B cell (primary cell): ENCODE measurements at regions of chr5 and their contacts with region 1.

Region 1: GRCh38 chr5:141960449-141961202 is 2.6 kb upstream of the PCDH12 start:
- DNase-seq: peak; percentile 93
- ATAC-seq: peak; percentile 97
- H3K4me3 ChIP-seq: peak overlapping the region in 1 of 5 experiments; percentile 2
- H3K4me3 Mint-ChIP-seq: peak overlapping the region; percentile 29
- H3K27ac ChIP-seq: peak overlapping the region in 1 of 2 donors; percentile 18
- H3K27ac Mint-ChIP-seq: peak overlapping the region; percentile 73
- H3K4me1 ChIP-seq: peaks cover 10 to 25% of the 10 kb centered on the region in 2 donors
- H3K4me1 Mint-ChIP-seq: peaks cover 17% of the 10 kb centered on the region
- H3K27me3 ChIP-seq: no peaks in the 10 kb centered on the region
- H3K27me3 Mint-ChIP-seq: no peaks in the 10 kb centered on the region
- CTCF ChIP-seq: peak; percentile 80

Region 2: DNA sequence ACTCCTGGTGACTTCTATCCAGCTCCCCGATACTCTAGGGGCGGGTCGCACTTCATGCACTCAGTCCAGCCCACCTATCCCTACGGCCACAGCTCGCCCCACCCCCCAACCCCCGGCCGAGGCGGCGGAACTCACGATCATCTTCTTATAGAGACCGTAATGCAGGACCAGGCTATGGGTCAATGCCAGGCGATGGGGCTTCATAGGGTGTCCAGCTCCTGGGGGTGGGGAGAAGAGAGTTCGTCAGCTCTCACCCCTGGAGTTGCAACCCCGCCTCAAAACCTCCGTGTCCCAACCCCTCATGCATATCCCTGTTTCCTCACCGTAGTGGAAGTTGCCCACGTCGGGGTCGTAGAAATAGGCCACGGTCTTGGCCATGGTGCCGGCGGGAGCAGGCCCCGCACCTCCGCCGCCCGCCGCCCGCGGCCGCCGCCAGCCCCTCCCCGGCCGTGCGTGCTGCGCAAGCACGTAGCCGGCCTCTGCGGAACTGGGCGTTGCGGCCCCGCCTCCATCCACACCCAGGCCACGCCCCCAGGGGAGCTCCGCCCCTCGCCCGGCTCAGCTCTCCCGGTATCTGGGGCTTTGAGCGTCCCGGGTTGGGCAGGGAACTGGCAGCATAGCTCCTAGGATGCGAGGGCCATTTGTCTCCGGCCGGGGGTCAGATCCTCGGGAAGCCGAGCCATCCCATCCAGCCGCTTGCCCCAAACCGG is 324.1 kb before region 1 on chr5 and contains the starts of genes HDAC3 and RELL2:
- CTCF ChIA-PET with region 1: no interaction called
- POLR2A ChIA-PET with region 1: no interaction called
- intact Hi-C with region 1: loop called (anchors 2 kb)
- DNase-seq: peak; percentile 94
- ATAC-seq: peak; percentile 89
- H3K4me3 ChIP-seq: peak within 1 kb of the TSS; percentile 70 to 99 (median 82)
- H3K4me3 Mint-ChIP-seq: peak within 1 kb of the TSS; percentile 94
- H3K27ac ChIP-seq: peak within 1 kb of the TSS; percentile 58 to 77
- H3K27ac Mint-ChIP-seq: peak within 1 kb of the TSS; percentile 85
- H3K4me1 ChIP-seq: peaks cover 30 to 36% of the 10 kb centered on the region in 2 donors
- H3K4me1 Mint-ChIP-seq: peaks cover 39% of the 10 kb centered on the region
- H3K27me3 ChIP-seq: no peaks in the 10 kb centered on the region
- H3K27me3 Mint-ChIP-seq: no peaks in the 10 kb centered on the region
- CTCF ChIP-seq: no peak
- total RNA-seq, gene HDAC3: 85.5 and 86.9 TPM in 2 replicates
- total RNA-seq, gene RELL2: 11.6 and 12.1 TPM in 2 replicates

Region 3: DNA sequence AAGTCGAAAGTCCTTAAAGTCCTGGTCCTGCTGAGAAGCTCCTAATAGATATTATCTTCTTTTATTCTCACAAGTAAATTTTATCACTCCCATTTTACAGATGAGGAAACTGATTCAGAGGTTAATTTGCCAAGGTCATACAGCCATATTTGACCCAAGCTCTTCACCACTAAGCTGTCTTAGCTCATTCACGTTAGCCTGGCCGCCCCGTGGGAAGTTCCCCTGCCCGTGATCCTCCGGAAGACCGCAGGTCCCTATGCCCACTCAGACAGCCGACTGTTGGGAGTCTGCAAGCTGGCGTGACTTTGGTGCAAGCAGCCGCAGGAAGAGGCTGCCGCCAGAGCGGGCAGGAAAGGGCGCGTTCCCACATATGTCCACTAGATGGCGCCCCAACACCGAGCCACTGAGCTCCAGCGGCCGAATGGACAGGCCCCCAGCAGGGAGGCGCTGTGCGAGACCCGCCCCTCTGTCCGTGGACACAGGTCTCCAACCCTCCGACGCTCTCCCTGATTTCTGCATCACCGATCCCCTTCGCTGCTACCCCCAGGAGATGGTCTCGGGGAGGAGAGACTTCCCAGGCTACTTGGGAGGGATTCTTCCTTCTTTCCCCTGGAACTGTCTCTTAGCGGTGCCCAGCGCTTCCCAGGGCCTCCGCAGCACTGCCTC is 268.6 kb before region 1 on chr5:
- CTCF ChIA-PET with region 1: interaction called, 198 read pairs
- POLR2A ChIA-PET with region 1: interaction called, 7 read pairs
- intact Hi-C with region 1: loop called (anchors 1 kb)
- DNase-seq: peak; percentile 86
- ATAC-seq: peak; percentile 95
- H3K4me3 ChIP-seq: peak overlapping the region in 4 of 5 experiments; percentile 3 to 57 (median 33)
- H3K4me3 Mint-ChIP-seq: peak overlapping the region; percentile 44
- H3K27ac ChIP-seq: no peak overlapping the region
- H3K27ac Mint-ChIP-seq: no peak overlapping the region
- H3K4me1 ChIP-seq: peaks cover 8% of the 10 kb centered on the region in 2 donors
- H3K4me1 Mint-ChIP-seq: peaks cover 7% of the 10 kb centered on the region
- H3K27me3 ChIP-seq: peaks cover 0 to 47% (median 7%) of the 10 kb centered on the region in 4 experiments
- H3K27me3 Mint-ChIP-seq: peaks cover 68% of the 10 kb centered on the region
- CTCF ChIP-seq: peak; percentile 98

Region 4: GRCh38 chr5:141889282-141889871 is 71.2 kb before region 1 on chr5:
- CTCF ChIA-PET with region 1: interaction called, 25 read pairs
- POLR2A ChIA-PET with region 1: no interaction called
- intact Hi-C with region 1: no loop called
- DNase-seq: no peak
- ATAC-seq: no peak
- H3K4me3 ChIP-seq: no peak overlapping the region
- H3K4me3 Mint-ChIP-seq: no peak overlapping the region
- H3K27ac ChIP-seq: no peak overlapping the region
- H3K27ac Mint-ChIP-seq: no peak overlapping the region
- H3K4me1 ChIP-seq: peaks cover 0 to 4% of the 10 kb centered on the region in 2 donors
- H3K4me1 Mint-ChIP-seq: no peaks in the 10 kb centered on the region
- H3K27me3 ChIP-seq: peaks cover 0 to 11% (median 8%) of the 10 kb centered on the region in 4 experiments
- H3K27me3 Mint-ChIP-seq: peaks cover 34% of the 10 kb centered on the region
- CTCF ChIP-seq: no peak

Region 5: DNA sequence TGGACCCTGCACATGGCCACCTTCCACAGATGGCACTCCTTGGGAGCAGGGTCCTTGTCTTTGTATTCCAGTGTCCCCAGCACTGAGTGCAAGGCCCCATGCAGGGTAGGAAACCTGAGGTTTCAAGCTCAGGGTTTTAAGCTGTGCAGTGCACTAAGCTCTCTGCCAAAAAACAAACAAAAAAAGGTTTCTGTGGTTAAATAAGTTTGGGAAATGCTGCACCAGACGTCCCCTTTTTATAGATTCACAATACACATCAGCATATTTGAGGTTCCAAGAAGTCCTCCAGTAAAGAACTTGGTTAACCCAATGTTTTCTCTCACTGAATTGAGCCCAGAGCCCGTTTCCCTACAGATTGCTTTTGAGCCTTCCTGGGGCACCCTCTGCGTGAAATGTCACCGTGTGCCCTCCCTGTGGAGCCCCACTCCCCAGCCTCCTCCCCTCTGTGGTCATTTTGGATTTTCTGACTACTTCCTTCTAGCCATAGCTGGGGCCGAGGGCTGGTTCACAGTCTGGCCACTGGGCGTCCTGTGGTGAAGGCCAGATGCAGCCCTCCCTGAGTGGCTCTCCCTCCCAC is 19.8 kb before region 1 on chr5:
- CTCF ChIA-PET with region 1: interaction called, 25 read pairs
- POLR2A ChIA-PET with region 1: no interaction called
- intact Hi-C with region 1: no loop called
- DNase-seq: no peak
- ATAC-seq: no peak
- H3K4me3 ChIP-seq: no peak overlapping the region
- H3K4me3 Mint-ChIP-seq: no peak overlapping the region
- H3K27ac ChIP-seq: no peak overlapping the region
- H3K27ac Mint-ChIP-seq: peak overlapping the region; percentile 41
- H3K4me1 ChIP-seq: no peaks in the 10 kb centered on the region
- H3K4me1 Mint-ChIP-seq: no peaks in the 10 kb centered on the region
- H3K27me3 ChIP-seq: no peaks in the 10 kb centered on the region
- H3K27me3 Mint-ChIP-seq: no peaks in the 10 kb centered on the region
- CTCF ChIP-seq: no peak